HEK293 (cell line): ENCODE measurements at regions of chr2 and their contacts with region 1.

Region 1: DNA sequence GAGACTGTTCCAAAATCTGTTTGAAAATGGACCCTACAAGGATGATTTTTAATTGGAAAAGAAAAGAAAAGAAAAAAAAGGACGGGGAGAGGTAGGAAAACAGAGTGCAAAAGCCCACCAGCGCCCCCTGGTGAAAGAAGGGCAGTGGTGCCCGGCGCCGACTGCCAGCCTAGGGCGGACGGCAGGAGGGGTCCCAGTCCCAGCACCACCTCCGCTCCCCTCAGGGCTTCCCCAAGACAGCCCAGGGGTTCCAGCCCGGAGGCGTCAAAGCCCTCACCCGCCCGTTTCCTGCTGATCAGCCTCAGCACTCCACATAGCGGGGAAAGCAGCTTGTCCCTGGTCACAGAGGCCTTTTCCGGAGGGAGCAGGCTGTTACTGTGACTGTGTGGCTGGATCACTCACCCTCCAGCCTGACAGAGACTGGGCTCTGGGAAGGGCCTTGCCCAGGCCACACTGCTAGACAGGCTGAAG is 213.9 kb downstream of the TFCP2L1 start:
- H3K4me3 ChIP-seq: no peak overlapping the region
- H3K27ac ChIP-seq: no peak overlapping the region; the same call in 1 of the 2 replicates
- H3K4me1 ChIP-seq: peaks cover 8% of the 10 kb centered on the region; the same call in 1 of the 2 replicates
- CTCF ChIP-seq: peak; percentile 81

Region 2: GRCh38 chr2:120703330-120703994 is 367.6 kb before region 1 on chr2:
- CTCF ChIA-PET with region 1: interaction called, 28 read pairs
- POLR2A ChIA-PET with region 1: interaction called, 5 read pairs
- H3K4me3 ChIP-seq: no peak overlapping the region
- H3K27ac ChIP-seq: no peak overlapping the region
- H3K4me1 ChIP-seq: peaks cover 3% of the 10 kb centered on the region; the same call in 1 of the 2 replicates
- CTCF ChIP-seq: no peak

Region 3: DNA sequence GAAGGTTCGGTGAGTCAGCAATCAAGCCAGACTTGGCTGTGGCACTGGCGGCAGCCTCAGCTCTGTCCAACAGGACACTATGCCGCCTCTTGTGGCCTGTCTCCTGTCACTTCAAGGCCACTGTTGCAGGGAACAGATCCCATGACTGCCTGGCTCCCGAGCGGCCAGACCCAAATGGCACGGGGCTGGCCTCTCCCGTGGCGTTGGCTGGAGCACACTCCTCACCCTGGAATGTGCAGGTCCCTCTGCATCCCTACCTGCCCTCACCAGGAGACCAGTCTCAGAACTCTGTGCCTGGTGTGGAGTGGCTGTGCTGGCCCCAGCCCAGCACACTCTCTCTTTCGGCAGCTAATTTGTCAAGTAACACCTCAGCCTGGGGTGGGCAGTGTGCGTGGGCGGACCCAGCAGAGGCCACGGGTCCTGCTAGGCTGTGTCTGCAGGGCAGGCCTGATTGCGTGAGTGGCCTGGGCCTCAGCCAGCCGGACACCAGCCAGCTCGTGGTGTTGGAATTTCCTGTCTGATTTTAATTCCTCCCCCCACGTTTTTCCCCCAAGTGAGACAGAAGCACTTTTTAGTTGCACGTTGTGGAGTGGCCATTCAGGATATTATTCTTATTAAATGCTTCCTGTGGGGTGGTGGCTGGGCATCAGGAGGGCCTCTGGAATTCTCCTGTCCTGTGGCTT is 156.1 kb before region 1 on chr2:
- CTCF ChIA-PET with region 1: no interaction called
- POLR2A ChIA-PET with region 1: no interaction called
- H3K4me3 ChIP-seq: no peak overlapping the region
- H3K27ac ChIP-seq: no peak overlapping the region
- H3K4me1 ChIP-seq: no peaks in the 10 kb centered on the region
- CTCF ChIP-seq: no peak

Region 4: DNA sequence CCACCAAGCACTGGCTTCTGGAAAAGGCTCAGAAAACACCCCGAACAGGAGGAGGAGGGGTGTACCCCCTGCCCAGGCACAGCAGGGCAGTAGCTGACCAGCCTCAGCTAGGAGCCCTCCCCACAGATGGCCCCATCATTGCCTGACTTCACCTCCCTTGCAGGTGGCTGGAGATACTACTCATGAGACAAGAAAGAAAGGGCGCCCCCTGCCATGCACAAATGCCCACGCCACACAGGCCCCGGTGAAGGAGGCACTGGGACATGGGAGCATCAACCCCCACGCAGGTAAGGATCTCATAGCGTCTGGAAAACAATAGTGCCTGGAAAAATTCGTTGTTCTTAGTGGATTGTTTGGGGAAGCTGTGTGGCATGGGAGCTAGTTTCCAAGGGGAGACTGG is 26.7 kb before region 1 on chr2:
- CTCF ChIA-PET with region 1: no interaction called
- POLR2A ChIA-PET with region 1: no interaction called
- H3K4me3 ChIP-seq: no peak overlapping the region
- H3K27ac ChIP-seq: no peak overlapping the region
- H3K4me1 ChIP-seq: no peaks in the 10 kb centered on the region
- CTCF ChIP-seq: no peak

Region 5: DNA sequence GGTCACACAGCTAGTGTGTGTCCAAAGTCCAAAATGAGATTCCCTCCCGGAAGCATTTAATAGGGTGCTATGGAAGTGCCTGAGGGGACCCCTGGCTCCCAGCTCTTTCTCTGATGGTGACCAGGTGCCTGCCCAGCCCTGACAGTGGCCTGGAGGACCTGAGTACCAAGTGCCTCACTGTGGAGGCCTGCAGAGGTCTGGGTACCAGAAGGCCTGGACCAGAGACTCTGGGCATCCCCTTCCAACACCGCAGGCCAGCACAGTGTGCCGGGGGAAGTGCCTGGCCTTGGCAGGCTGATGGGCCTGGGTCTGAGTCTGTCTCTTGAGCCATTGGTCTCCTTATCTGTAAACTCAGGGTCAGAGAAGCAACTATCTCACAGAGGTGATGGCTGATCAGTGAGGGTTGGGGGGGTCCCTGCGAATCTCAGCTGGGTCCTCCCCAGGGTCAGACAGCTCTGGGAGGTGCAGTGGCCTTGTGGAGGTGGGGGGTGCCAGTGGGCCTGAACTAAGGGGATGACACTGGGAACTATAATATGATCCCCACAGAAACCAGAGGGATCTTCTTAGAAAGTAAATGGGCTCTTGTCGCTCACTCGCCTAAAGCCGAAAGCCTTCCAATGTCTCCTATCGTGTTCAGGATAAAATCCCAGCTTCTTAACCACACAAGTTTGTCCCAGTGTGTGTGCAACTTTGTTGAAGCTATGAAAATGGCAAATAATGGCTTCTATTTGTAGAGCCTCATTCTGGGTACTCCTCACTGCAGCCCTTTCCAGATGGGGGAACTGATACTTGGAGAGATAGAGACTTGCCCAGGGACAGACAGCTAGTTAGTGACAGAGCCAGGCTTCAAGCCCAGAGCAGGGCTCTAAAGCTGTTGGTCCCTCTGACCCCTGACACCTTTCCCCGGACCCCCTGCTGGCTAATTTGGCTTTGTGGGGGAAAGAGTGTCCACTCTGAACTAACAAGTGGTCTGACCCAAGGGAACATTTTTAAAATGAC is 11.1 kb before region 1 on chr2:
- CTCF ChIA-PET with region 1: interaction called, 13 read pairs
- POLR2A ChIA-PET with region 1: interaction called, 4 read pairs
- H3K4me3 ChIP-seq: no peak overlapping the region
- H3K27ac ChIP-seq: no peak overlapping the region
- H3K4me1 ChIP-seq: peaks cover 5% of the 10 kb centered on the region; the same call in 1 of the 2 replicates
- CTCF ChIP-seq: no peak

Region 6: DNA sequence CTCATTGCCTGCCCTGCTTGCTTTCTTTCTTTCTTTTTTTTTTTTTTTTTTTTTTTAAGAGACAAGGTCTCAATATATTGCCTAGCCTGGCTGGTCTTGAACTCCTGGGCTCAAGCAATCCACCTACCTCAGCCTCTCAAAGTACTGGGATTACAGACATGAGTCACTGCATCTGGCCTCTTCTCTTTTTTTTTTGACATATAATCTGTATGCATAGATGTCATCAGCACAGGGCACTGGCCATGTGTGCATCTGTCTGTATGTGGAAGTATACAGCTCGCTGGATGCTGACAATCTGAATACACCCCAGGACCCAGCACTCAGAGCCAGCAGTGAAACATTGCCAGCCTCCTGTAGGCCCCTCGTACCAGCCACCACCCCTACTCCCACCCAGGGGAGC is 164.5 kb after region 1 on chr2:
- CTCF ChIA-PET with region 1: no interaction called
- POLR2A ChIA-PET with region 1: no interaction called
- H3K4me3 ChIP-seq: no peak overlapping the region
- H3K27ac ChIP-seq: no peak overlapping the region
- H3K4me1 ChIP-seq: no peaks in the 10 kb centered on the region
- CTCF ChIP-seq: no peak

Region 7: GRCh38 chr2:121596221-121597080 is 525.4 kb after region 1 on chr2:
- CTCF ChIA-PET with region 1: no interaction called
- POLR2A ChIA-PET with region 1: no interaction called
- H3K4me3 ChIP-seq: no peak overlapping the region
- H3K27ac ChIP-seq: no peak overlapping the region
- H3K4me1 ChIP-seq: peaks cover 4% of the 10 kb centered on the region; the same call in 1 of the 2 replicates
- CTCF ChIP-seq: peak; percentile 65